ENCODE measurements at regions of chr14 and their contacts with region 1.

Region 1: DNA sequence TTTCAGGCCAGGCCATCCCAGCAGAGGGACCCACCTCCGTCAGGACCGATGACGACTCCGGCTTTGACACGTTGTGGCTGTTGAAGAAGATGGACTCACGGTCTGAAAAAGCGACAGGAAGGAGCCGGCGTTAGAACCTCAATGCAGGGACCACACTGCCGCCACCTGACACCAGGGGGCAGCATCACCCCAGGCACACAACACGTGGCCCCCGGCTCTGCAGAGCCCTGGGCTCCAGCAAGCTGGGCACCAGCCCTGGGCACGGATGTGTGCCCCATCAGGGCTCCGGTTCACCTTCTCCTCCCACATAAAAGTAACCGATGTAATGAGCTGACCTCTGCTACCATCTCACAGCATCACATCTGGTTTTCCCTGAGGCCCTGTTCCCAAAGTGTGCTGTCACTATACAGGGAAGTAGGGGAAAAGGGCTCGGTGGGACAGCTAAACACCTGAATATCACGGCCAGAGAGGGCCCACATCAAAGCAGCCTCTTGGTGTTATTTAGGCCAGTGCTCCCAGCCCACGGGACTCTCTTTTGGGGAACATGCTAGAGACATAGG is 29.0 kb downstream of the CHGA start:
- DNase-seq: peak; percentile 78 to 83 (median 79)
- ATAC-seq: peak; percentile 92 to 97 (median 94)
- H3K4me3 ChIP-seq: no peak overlapping the region
- H3K27ac ChIP-seq: no peak overlapping the region
- H3K4me1 ChIP-seq: peaks cover 0 to under 1% (median 0%) of the 10 kb centered on the region in 4 donors
- H3K27me3 ChIP-seq: no peaks in the 10 kb centered on the region
- CTCF ChIP-seq: peak; percentile 93 to 98 (median 96)
- POLR2A ChIP-seq: no peak

Region 2: GRCh38 chr14:93105362-93105761 is 153.4 kb after region 1 on chr14:
- intact Hi-C with region 1: loop called in 1 of 2 experiments (anchors 5 kb)
- DNase-seq: peak; percentile 69 to 84 (median 72)
- ATAC-seq: peak in 3 of 4 donors; percentile 35 to 43 (median 36)
- H3K4me3 ChIP-seq: no peak overlapping the region
- H3K27ac ChIP-seq: peak overlapping the region in 2 of 3 donors; percentile 52 to 84
- H3K4me1 ChIP-seq: peaks cover 0 to 40% (median 19%) of the 10 kb centered on the region in 4 donors
- H3K27me3 ChIP-seq: no peaks in the 10 kb centered on the region
- CTCF ChIP-seq: no peak
- POLR2A ChIP-seq: no peak

Region 3: DNA sequence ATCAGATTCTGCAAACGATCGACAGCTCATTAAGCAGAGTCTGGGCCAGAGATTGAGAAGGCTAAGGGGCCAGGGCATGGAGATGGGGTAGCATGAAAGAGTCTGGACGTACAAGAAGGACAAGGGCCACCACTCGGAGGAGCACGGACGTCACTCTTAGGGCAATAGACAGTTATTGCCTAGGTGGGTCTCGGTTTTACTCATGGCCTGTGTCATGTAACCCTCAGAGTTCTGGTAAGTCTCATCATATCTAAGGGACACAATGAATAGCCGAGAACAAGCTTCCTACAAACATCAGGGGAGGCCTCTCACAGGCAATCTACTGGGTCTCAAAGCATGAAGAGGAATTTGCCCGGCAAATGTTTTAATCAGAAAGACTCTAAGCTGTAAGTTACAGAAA is 194.1 kb after region 1 on chr14:
- intact Hi-C with region 1: loop called in 1 of 2 experiments (anchors 10 kb)
- DNase-seq: no peak
- ATAC-seq: no peak
- H3K4me3 ChIP-seq: no peak overlapping the region
- H3K27ac ChIP-seq: no peak overlapping the region
- H3K4me1 ChIP-seq: peaks cover 0 to 27% (median 8%) of the 10 kb centered on the region in 4 donors
- H3K27me3 ChIP-seq: no peaks in the 10 kb centered on the region
- CTCF ChIP-seq: no peak
- POLR2A ChIP-seq: no peak